Activated CD4-positive, alpha-beta T cell treated with anti-CD3 and anti-CD28 coated beads, Interleukin-2, amount 10 ng/mL, durations not matched to agents 24 days and 14 days (primary cell): ENCODE measurements at regions of chr5 and their contacts with region 1.

Region 1: DNA sequence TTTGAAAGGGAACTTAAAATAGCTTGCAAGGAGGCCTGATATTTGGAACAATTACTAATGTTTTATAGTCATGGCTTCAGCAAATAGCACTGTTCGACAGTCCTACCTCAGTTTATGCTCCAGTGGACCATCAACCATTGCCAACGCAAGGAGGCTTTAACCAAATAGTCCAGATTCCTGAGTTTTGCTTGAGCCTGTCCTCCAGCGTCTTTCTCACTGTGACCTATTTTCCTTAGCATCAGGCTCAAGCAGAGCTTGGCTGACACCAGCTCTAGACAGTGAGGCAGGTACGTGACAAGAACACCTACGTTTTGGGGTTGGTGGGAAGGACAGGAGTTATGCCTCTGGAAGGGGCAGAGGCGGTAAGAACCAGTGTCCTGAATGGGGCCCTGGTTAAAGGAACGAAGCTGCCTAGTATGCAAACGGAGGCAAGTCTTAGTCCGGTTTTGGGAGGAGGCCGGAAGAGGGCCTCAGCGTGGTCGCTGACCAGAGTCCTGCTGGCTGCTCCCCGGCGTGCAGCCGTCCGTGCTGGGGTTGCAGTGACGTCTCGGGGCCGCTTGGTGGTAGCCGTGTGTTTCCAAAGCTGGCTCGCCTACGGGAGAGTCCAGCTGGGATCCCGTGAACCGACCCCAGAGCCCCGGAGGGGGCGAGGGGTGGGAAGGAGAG is 998 bp upstream of the FGF18 start:
- DNase-seq: peak; percentile 88
- H3K4me3 Mint-ChIP-seq: peak overlapping the region; percentile 80
- H3K27ac Mint-ChIP-seq: no peak overlapping the region
- H3K4me1 Mint-ChIP-seq: peaks cover 13% of the 10 kb centered on the region
- H3K27me3 Mint-ChIP-seq: peaks cover 20% of the 10 kb centered on the region

Region 2: DNA sequence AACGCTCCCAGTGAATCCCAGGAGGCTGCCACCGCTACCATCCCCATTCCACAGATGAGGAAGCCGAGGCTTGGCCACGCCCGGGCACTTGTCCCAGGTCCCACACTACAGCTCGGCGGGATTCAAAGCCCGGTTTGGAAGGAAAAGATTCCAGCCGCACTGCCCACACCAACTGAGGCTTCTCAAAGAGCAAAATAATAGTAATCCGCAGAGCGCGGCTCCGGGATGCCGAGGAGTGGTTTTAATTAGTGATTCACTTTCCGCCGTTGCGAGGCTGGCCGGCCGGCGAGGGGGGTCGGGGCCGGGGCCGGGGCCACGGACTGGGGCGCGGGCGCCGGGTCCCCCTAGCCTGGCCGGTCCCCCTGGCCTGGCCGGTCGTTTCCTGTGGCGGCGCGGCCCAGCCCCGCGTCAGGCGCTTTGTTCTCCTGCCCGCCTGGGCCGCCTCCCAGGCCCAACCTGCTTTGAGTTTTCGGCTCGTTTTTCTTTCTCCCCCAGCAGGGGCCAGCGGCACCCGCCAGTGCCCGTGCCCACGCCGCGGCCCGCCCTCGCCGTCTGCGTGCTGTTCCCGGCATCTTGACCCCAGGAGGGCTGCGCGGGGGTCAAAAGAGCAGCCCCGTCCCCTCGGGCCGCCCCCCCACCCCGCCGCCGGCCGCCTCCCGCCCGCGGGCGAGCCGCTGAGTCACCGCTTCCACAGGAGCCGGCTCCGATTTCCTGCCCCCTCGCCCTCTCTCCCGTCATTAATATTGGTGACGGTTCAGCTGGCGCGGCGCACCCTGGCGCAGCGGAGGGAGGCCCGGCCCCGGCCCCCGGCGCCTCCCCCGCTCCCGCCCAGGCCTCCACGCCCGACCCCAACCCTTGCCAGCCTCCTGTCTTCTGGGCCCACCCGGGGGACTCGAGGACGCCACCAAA is 32.2 kb after region 1 on chr5:
- intact Hi-C with region 1: no loop called
- DNase-seq: no peak
- H3K4me3 Mint-ChIP-seq: peak overlapping the region; percentile 31
- H3K27ac Mint-ChIP-seq: no peak overlapping the region
- H3K4me1 Mint-ChIP-seq: peaks cover 2% of the 10 kb centered on the region
- H3K27me3 Mint-ChIP-seq: peaks cover 40% of the 10 kb centered on the region

Region 3: GRCh38 chr5:171462928-171463862 is 44.7 kb after region 1 on chr5:
- intact Hi-C with region 1: no loop called
- DNase-seq: no peak
- H3K4me3 Mint-ChIP-seq: no peak overlapping the region
- H3K27ac Mint-ChIP-seq: no peak overlapping the region
- H3K4me1 Mint-ChIP-seq: no peaks in the 10 kb centered on the region
- H3K27me3 Mint-ChIP-seq: no peaks in the 10 kb centered on the region

Region 4: DNA sequence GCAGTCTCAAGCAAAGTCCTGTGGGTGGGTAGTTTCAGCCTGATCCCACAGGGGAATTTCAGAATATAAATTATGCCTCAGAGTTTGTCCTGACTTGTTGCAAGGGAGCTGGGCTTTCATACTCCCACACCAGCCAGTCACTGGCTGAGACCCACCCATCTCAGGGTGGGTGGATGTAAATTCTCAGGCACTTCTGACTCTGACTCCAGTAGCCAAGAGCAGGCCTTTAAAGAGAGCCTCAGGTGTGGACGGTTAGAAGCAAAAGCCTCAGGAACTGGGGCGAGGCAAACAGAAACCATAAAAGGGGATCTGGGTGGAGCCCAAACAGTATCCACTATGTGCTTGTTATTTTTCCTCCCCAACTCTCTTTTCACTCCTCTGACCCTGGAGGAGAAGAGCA is 616.6 kb after region 1 on chr5:
- intact Hi-C with region 1: loop called (anchors 1 kb)
- DNase-seq: no peak
- H3K4me3 Mint-ChIP-seq: peak overlapping the region; percentile 31
- H3K27ac Mint-ChIP-seq: peak overlapping the region; percentile 39
- H3K4me1 Mint-ChIP-seq: peaks cover 12% of the 10 kb centered on the region
- H3K27me3 Mint-ChIP-seq: no peaks in the 10 kb centered on the region

Region 5: GRCh38 chr5:172293054-172293744 is 874.8 kb after region 1 on chr5:
- intact Hi-C with region 1: loop called (anchors 10 kb)
- DNase-seq: peak; percentile 89
- H3K4me3 Mint-ChIP-seq: no peak overlapping the region
- H3K27ac Mint-ChIP-seq: no peak overlapping the region
- H3K4me1 Mint-ChIP-seq: peaks cover 3% of the 10 kb centered on the region
- H3K27me3 Mint-ChIP-seq: peaks cover 10% of the 10 kb centered on the region